T-cell (primary cell): ENCODE measurements at regions of chr5 and their contacts with region 1.

Region 1: DNA sequence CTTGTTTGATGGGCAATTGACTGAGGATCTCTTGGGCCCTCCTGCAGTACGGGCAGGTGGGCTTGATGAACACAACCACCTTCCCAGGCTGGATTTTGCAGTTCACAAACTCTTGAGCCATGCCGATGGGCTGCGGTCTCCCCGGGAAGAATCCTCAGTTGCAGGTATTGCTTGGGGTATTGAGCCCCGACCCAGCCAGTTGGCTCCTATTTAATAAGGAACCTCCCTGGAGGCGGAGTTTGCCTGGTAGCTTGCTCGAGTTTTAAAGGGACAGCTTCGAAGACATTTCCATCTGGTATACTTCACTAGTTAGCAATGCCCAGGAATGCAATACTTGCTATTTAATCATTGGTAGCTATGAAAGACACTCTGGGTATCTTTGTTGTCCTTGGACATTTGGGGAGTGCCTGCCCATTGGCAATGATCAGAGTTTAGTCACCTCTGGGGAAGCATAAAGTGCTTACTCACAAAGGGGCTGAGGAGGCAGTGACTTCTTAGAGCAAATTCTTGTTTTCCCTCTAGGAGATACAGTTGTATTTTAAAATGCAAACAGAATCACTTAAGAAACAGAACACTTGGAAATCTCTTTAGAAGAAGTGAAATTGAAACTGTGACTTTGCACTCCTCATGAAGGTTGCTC is at the start of gene GLRX:
- DNase-seq: peak in 29 of 35 experiments; percentile 10 to 70 (median 45)
- ATAC-seq: peak; percentile 44 to 57 (median 50)
- H3K4me3 ChIP-seq: peak within 1 kb of the TSS; percentile 59 to 99
- H3K4me3 Mint-ChIP-seq: peak within 1 kb of the TSS; percentile 98 to 99 (median 98)
- H3K27ac ChIP-seq: peak within 1 kb of the TSS; percentile 86
- H3K27ac Mint-ChIP-seq: peak within 1 kb of the TSS; percentile 97 to 99
- H3K4me1 ChIP-seq: peaks cover 51 to 65% of the 10 kb centered on the region in 2 experiments
- H3K4me1 Mint-ChIP-seq: peaks cover 69 to 80% (median 75%) of the 10 kb centered on the region in 3 donors
- H3K27me3 ChIP-seq: no peaks in the 10 kb centered on the region
- H3K27me3 Mint-ChIP-seq: no peaks in the 10 kb centered on the region
- total RNA-seq, gene GLRX: 27.6 to 73.3 (median 56.8) TPM

Region 2: GRCh38 chr5:95808686-95809413 is 13.8 kb before region 1 on chr5:
- CTCF ChIA-PET with region 1: interaction called, 4 to 32 read pairs
- POLR2A ChIA-PET with region 1: interaction called, 4 to 14 read pairs
- DNase-seq: peak; percentile 46 to 92 (median 84)
- ATAC-seq: peak; percentile 99
- H3K4me3 ChIP-seq: no peak overlapping the region
- H3K4me3 Mint-ChIP-seq: peak overlapping the region; percentile 25 to 73 (median 59)
- H3K27ac ChIP-seq: peak overlapping the region; percentile 88
- H3K27ac Mint-ChIP-seq: peak overlapping the region; percentile 95 to 98
- H3K4me1 ChIP-seq: peaks cover 44 to 54% of the 10 kb centered on the region in 2 experiments
- H3K4me1 Mint-ChIP-seq: peaks cover 61 to 66% (median 64%) of the 10 kb centered on the region in 3 donors
- H3K27me3 ChIP-seq: no peaks in the 10 kb centered on the region
- H3K27me3 Mint-ChIP-seq: no peaks in the 10 kb centered on the region

Region 3: GRCh38 chr5:95835682-95836385 is 13.2 kb after region 1 on chr5:
- CTCF ChIA-PET with region 1: interaction called, 4 to 13 read pairs
- POLR2A ChIA-PET with region 1: interaction called, 3 to 4 read pairs
- DNase-seq: peak in 12 of 35 experiments; percentile 16 to 58 (median 33)
- ATAC-seq: peak in 3 of 4 experiments; percentile 51 to 57 (median 57)
- H3K4me3 ChIP-seq: peak overlapping the region; percentile 53 to 76
- H3K4me3 Mint-ChIP-seq: peak overlapping the region; percentile 82 to 87 (median 84)
- H3K27ac ChIP-seq: peak overlapping the region; percentile 88
- H3K27ac Mint-ChIP-seq: peak overlapping the region; percentile 94 to 95
- H3K4me1 ChIP-seq: peaks cover 20 to 24% of the 10 kb centered on the region in 2 experiments
- H3K4me1 Mint-ChIP-seq: peaks cover 57 to 62% (median 58%) of the 10 kb centered on the region in 3 donors
- H3K27me3 ChIP-seq: no peaks in the 10 kb centered on the region
- H3K27me3 Mint-ChIP-seq: no peaks in the 10 kb centered on the region

Region 4: DNA sequence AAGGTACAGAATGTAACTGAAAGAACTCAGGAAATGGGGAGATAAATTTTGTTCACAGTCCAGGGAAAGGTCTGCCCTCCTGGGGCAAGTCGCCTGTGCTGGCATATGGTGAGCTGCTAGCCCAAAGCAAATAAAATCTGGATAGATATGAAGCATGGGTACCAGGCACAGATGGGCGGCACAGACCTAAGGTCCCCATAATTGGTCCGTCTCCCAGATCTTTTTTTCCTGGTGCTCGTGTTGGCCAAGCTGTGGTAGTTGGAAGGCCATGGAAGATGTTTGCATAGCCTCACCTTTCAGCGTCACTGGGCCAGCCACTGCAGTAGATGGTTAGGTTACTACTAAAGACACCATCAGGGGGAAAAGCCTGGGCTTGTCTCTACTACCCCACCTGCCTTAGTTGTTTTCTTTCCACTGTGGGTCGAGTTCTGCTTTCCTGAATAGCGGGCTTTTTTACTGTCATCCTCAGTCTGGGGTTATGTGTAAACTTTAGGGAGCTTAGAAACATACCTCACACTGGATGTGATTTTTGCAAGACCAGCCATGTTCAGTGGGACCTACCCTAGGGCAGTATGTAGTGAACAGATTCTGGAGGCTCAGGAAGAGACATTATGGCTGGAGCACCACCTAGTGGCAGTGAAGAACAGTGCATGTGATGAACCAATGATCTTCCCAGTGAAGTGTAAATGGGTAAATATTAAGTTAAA is 24.0 kb after region 1 on chr5:
- CTCF ChIA-PET with region 1: interaction called, 8 to 11 read pairs
- POLR2A ChIA-PET with region 1: interaction called, 4 to 8 read pairs
- DNase-seq: peak; percentile 28 to 87 (median 60)
- ATAC-seq: peak; percentile 74 to 80 (median 76)
- H3K4me3 ChIP-seq: no peak overlapping the region
- H3K4me3 Mint-ChIP-seq: no peak overlapping the region
- H3K27ac ChIP-seq: no peak overlapping the region
- H3K27ac Mint-ChIP-seq: no peak overlapping the region
- H3K4me1 ChIP-seq: peaks cover 7 to 17% of the 10 kb centered on the region in 2 experiments
- H3K4me1 Mint-ChIP-seq: peaks cover 14 to 23% (median 22%) of the 10 kb centered on the region in 3 donors
- H3K27me3 ChIP-seq: no peaks in the 10 kb centered on the region
- H3K27me3 Mint-ChIP-seq: peaks cover 3% of the 10 kb centered on the region in 2 donors